Naive thymus-derived CD4-positive, alpha-beta T cell (primary cell): ENCODE measurements at regions of chr19 and their contacts with region 1.

Region 1: GRCh38 chr19:58519355-58520256 is at the start of gene ZBTB45:
- DNase-seq: peak; percentile 81 to 97 (median 88)
- ATAC-seq: peak; percentile 89
- H3K4me3 ChIP-seq: peak within 1 kb of the TSS; percentile 76
- H3K4me3 Mint-ChIP-seq: peak within 1 kb of the TSS; percentile 90 to 97 (median 95)
- H3K27ac ChIP-seq: peak within 1 kb of the TSS; percentile 86
- H3K27ac Mint-ChIP-seq: peak within 1 kb of the TSS; percentile 92 to 99 (median 97)
- H3K4me1 ChIP-seq: peaks cover 10 to 14% of the 10 kb centered on the region in 2 donors
- H3K4me1 Mint-ChIP-seq: peaks cover 29 to 43% (median 37%) of the 10 kb centered on the region in 7 donors
- H3K27me3 ChIP-seq: no peaks in the 10 kb centered on the region
- H3K27me3 Mint-ChIP-seq: peaks cover 0 to 3% (median 0%) of the 10 kb centered on the region in 5 donors
- total RNA-seq, gene ZBTB45: 9.8 to 19.2 (median 17.0) TPM

Region 2: GRCh38 chr19:58278157-58279041 is 241.2 kb before region 1 on chr19 and contains the start of gene ZNF8:
- CTCF ChIA-PET with region 1: no interaction called
- POLR2A ChIA-PET with region 1: no interaction called
- intact Hi-C with region 1: no loop called
- DNase-seq: peak; percentile 84 to 96 (median 93)
- ATAC-seq: peak; percentile 99
- H3K4me3 ChIP-seq: peak within 1 kb of the TSS; percentile 93
- H3K4me3 Mint-ChIP-seq: peak within 1 kb of the TSS; percentile 89 to 99 (median 95)
- H3K27ac ChIP-seq: peak within 1 kb of the TSS; percentile 80
- H3K27ac Mint-ChIP-seq: peak within 1 kb of the TSS; percentile 88 to 97 (median 96)
- H3K4me1 ChIP-seq: peaks cover 12 to 15% of the 10 kb centered on the region in 2 donors
- H3K4me1 Mint-ChIP-seq: peaks cover 28 to 63% (median 43%) of the 10 kb centered on the region in 7 donors
- H3K27me3 ChIP-seq: no peaks in the 10 kb centered on the region
- H3K27me3 Mint-ChIP-seq: no peaks in the 10 kb centered on the region
- total RNA-seq, gene ZNF8: 5.2 to 10.5 (median 10.0) TPM

Region 3: DNA sequence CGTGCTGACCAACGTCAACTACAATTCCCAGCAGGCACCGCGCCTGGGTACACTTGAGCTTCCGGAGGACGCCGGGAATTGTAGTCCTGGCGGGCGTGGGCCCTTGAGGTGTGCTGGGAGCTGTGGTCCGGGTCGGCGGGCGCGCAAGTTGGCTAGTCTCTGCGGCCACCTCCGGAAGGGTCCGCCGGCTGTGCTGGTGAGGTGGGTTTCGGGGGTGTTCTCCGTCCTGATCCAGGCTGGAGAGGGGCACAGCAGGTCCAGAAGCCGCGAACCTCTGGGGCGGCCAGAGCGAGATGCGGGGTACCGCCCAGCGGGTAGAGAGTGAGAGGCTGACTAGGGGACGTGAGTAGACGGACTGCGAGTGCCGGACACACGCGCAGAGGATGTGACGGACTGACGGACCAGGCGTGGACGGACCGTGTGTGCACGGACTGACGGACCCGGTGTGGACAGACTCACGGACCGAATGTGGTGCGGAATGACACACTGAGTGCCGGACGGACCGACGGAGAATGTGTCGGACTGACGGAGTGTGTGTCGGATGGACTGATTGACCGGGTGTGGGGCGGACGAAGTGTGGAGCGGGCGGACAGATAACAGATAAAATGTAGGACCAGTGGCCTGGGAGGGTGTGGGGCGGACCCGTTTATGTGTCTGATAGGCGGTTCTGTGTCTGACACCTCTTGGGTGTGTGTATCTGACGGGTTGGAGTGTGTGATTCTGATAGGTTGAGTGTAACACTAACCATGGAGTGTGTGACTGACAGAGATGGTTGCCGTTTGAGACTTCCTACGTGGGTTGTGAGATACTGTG is 192.5 kb before region 1 on chr19 and contains the start of gene ZSCAN22:
- CTCF ChIA-PET with region 1: no interaction called
- POLR2A ChIA-PET with region 1: interaction called, 3 read pairs
- intact Hi-C with region 1: loop called (anchors 1 kb)
- DNase-seq: peak; percentile 65 to 89 (median 78)
- ATAC-seq: peak; percentile 90
- H3K4me3 ChIP-seq: peak within 1 kb of the TSS; percentile 95
- H3K4me3 Mint-ChIP-seq: no peak within 1 kb of the TSS
- H3K27ac ChIP-seq: peak within 1 kb of the TSS; percentile 72
- H3K27ac Mint-ChIP-seq: no peak within 1 kb of the TSS
- H3K4me1 ChIP-seq: peaks cover 14 to 16% of the 10 kb centered on the region in 2 donors
- H3K4me1 Mint-ChIP-seq: peaks cover 0 to 10% (median 6%) of the 10 kb centered on the region in 7 donors
- H3K27me3 ChIP-seq: no peaks in the 10 kb centered on the region
- H3K27me3 Mint-ChIP-seq: no peaks in the 10 kb centered on the region
- total RNA-seq, gene ZSCAN22: 1.1 to 6.0 (median 4.5) TPM

Region 4: GRCh38 chr19:58475714-58476497 is 43.7 kb before region 1 on chr19 and contains the start of gene ZNF446:
- CTCF ChIA-PET with region 1: no interaction called
- POLR2A ChIA-PET with region 1: interaction called, 4 read pairs
- intact Hi-C with region 1: loop called (anchors 1 kb)
- DNase-seq: peak; percentile 84 to 97 (median 96)
- ATAC-seq: peak; percentile 92
- H3K4me3 ChIP-seq: peak within 1 kb of the TSS; percentile 77
- H3K4me3 Mint-ChIP-seq: peak within 1 kb of the TSS; percentile 78 to 99 (median 96)
- H3K27ac ChIP-seq: peak within 1 kb of the TSS; percentile 91
- H3K27ac Mint-ChIP-seq: peak within 1 kb of the TSS; percentile 87 to 100 (median 99)
- H3K4me1 ChIP-seq: peaks cover 14 to 16% of the 10 kb centered on the region in 2 donors
- H3K4me1 Mint-ChIP-seq: peaks cover 6 to 29% (median 17%) of the 10 kb centered on the region in 7 donors
- H3K27me3 ChIP-seq: no peaks in the 10 kb centered on the region
- H3K27me3 Mint-ChIP-seq: no peaks in the 10 kb centered on the region
- total RNA-seq, gene ZNF446: 9.5 to 20.0 (median 15.1) TPM

Region 5: GRCh38 chr19:58543826-58544590 is 24.4 kb after region 1 on chr19 and contains the start of gene TRIM28:
- CTCF ChIA-PET with region 1: interaction called, 10 read pairs
- POLR2A ChIA-PET with region 1: interaction called, 59 read pairs
- intact Hi-C with region 1: loop called (anchors 1 kb)
- DNase-seq: peak; percentile 100
- ATAC-seq: peak; percentile 92
- H3K4me3 ChIP-seq: peak within 1 kb of the TSS; percentile 97
- H3K4me3 Mint-ChIP-seq: peak within 1 kb of the TSS; percentile 94 to 99 (median 96)
- H3K27ac ChIP-seq: peak within 1 kb of the TSS; percentile 83
- H3K27ac Mint-ChIP-seq: peak within 1 kb of the TSS; percentile 96 to 100 (median 99)
- H3K4me1 ChIP-seq: peaks cover 16% of the 10 kb centered on the region in 2 donors
- H3K4me1 Mint-ChIP-seq: peaks cover 28 to 43% (median 36%) of the 10 kb centered on the region in 7 donors
- H3K27me3 ChIP-seq: no peaks in the 10 kb centered on the region
- H3K27me3 Mint-ChIP-seq: peaks cover 0 to 33% (median 0%) of the 10 kb centered on the region in 5 donors
- total RNA-seq, gene TRIM28: 396 to 564 (median 435) TPM

Region 6: DNA sequence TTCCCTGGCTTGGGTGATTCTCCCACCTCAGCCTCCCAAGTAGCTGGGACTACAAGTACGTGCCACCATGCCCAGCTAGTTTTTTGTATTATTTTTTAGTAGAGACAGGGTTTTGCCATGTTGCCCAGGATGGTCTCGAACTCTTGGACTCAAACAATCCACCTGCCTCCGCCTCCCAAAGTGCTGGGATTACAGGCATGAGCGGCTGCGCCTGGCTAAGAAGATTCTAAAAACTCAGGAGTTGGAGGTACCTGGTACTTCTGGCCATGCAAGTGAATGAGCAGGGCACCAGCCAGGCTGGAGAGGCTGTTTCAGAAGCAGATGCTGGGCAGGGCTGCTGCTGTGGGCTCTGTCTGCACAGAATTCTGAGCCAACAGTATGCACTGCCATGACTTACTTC is 47.4 kb after region 1 on chr19:
- CTCF ChIA-PET with region 1: interaction called, 10 read pairs
- POLR2A ChIA-PET with region 1: interaction called, 21 read pairs
- intact Hi-C with region 1: no loop called
- DNase-seq: no peak
- ATAC-seq: no peak
- H3K4me3 ChIP-seq: no peak overlapping the region
- H3K4me3 Mint-ChIP-seq: no peak overlapping the region
- H3K27ac ChIP-seq: no peak overlapping the region
- H3K27ac Mint-ChIP-seq: no peak overlapping the region
- H3K4me1 ChIP-seq: peaks cover 12 to 20% of the 10 kb centered on the region in 2 donors
- H3K4me1 Mint-ChIP-seq: peaks cover 14 to 37% (median 26%) of the 10 kb centered on the region in 7 donors
- H3K27me3 ChIP-seq: no peaks in the 10 kb centered on the region
- H3K27me3 Mint-ChIP-seq: peaks cover 0 to 4% (median 0%) of the 10 kb centered on the region in 5 donors

Region 7: GRCh38 chr19:58581227-58582151 is 61.9 kb after region 1 on chr19:
- CTCF ChIA-PET with region 1: interaction called, 46 read pairs
- POLR2A ChIA-PET with region 1: interaction called, 45 read pairs
- intact Hi-C with region 1: loop called (anchors 1 kb)
- DNase-seq: peak; percentile 81 to 91 (median 89)
- ATAC-seq: peak; percentile 100
- H3K4me3 ChIP-seq: no peak overlapping the region
- H3K4me3 Mint-ChIP-seq: peak overlapping the region in 1 of 10 donors; percentile 38
- H3K27ac ChIP-seq: peak overlapping the region; percentile 48
- H3K27ac Mint-ChIP-seq: peak overlapping the region; percentile 7 to 90 (median 78)
- H3K4me1 ChIP-seq: peaks cover 0 to 7% of the 10 kb centered on the region in 2 donors
- H3K4me1 Mint-ChIP-seq: peaks cover 12 to 29% (median 24%) of the 10 kb centered on the region in 7 donors
- H3K27me3 ChIP-seq: no peaks in the 10 kb centered on the region
- H3K27me3 Mint-ChIP-seq: no peaks in the 10 kb centered on the region